ENCODE measurements at regions of chr12 and their contacts with region 1.

Region 1: GRCh38 chr12:21172079-21172478 is 41.1 kb downstream of the SLCO1B1 start:
- DNase-seq: no peak
- ATAC-seq: no peak
- H3K4me3 ChIP-seq: no peak overlapping the region
- H3K4me3 Mint-ChIP-seq: no peak overlapping the region
- H3K27ac ChIP-seq: no peak overlapping the region
- H3K27ac Mint-ChIP-seq: no peak overlapping the region
- H3K4me1 ChIP-seq: no peaks in the 10 kb centered on the region
- H3K4me1 Mint-ChIP-seq: no peaks in the 10 kb centered on the region
- H3K27me3 ChIP-seq: no peaks in the 10 kb centered on the region
- H3K27me3 Mint-ChIP-seq: no peaks in the 10 kb centered on the region

Region 2: GRCh38 chr12:21111733-21112132 is 60.3 kb before region 1 on chr12:
- CTCF ChIA-PET with region 1: no interaction called
- POLR2A ChIA-PET with region 1: no interaction called
- DNase-seq: no peak
- ATAC-seq: no peak
- H3K4me3 ChIP-seq: no peak overlapping the region
- H3K4me3 Mint-ChIP-seq: no peak overlapping the region
- H3K27ac ChIP-seq: no peak overlapping the region
- H3K27ac Mint-ChIP-seq: no peak overlapping the region
- H3K4me1 ChIP-seq: no peaks in the 10 kb centered on the region
- H3K4me1 Mint-ChIP-seq: no peaks in the 10 kb centered on the region
- H3K27me3 ChIP-seq: no peaks in the 10 kb centered on the region
- H3K27me3 Mint-ChIP-seq: no peaks in the 10 kb centered on the region

Region 3: GRCh38 chr12:21138016-21138415 is 34.1 kb before region 1 on chr12:
- CTCF ChIA-PET with region 1: no interaction called
- POLR2A ChIA-PET with region 1: no interaction called
- DNase-seq: no peak
- ATAC-seq: no peak
- H3K4me3 ChIP-seq: no peak overlapping the region
- H3K4me3 Mint-ChIP-seq: no peak overlapping the region
- H3K27ac ChIP-seq: no peak overlapping the region
- H3K27ac Mint-ChIP-seq: no peak overlapping the region
- H3K4me1 ChIP-seq: no peaks in the 10 kb centered on the region
- H3K4me1 Mint-ChIP-seq: no peaks in the 10 kb centered on the region
- H3K27me3 ChIP-seq: no peaks in the 10 kb centered on the region
- H3K27me3 Mint-ChIP-seq: no peaks in the 10 kb centered on the region

Region 4: DNA sequence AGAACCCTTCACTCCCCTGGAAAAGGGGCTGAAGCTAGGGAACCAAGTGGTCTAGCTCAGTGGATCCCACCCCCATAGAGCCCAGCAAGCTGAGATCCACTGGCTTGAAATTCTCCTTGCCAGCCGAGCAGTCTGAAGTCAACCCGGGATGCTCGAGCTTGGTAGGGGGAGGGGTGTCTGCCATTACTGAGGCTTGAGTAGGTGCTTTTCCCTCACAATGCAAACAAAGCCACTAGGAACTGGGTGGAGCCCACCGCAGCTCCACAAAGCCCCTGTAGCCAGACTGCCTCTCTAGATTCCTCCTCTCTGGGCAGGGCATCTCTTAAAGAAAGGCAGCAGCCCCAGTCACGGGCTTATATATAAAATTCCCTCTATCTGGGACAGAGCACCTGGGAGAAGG is 22.2 kb before region 1 on chr12:
- CTCF ChIA-PET with region 1: interaction called in 1 of 2 experiments, 10 read pairs
- POLR2A ChIA-PET with region 1: no interaction called
- DNase-seq: no peak
- ATAC-seq: no peak
- H3K4me3 ChIP-seq: no peak overlapping the region
- H3K4me3 Mint-ChIP-seq: no peak overlapping the region
- H3K27ac ChIP-seq: no peak overlapping the region
- H3K27ac Mint-ChIP-seq: no peak overlapping the region
- H3K4me1 ChIP-seq: no peaks in the 10 kb centered on the region
- H3K4me1 Mint-ChIP-seq: peaks cover 0 to 3% (median 0%) of the 10 kb centered on the region in 3 donors
- H3K27me3 ChIP-seq: no peaks in the 10 kb centered on the region
- H3K27me3 Mint-ChIP-seq: no peaks in the 10 kb centered on the region

Region 5: GRCh38 chr12:21183721-21184275 is 11.7 kb after region 1 on chr12:
- CTCF ChIA-PET with region 1: no interaction called
- POLR2A ChIA-PET with region 1: no interaction called
- DNase-seq: no peak
- ATAC-seq: no peak
- H3K4me3 ChIP-seq: no peak overlapping the region
- H3K4me3 Mint-ChIP-seq: no peak overlapping the region
- H3K27ac ChIP-seq: no peak overlapping the region
- H3K27ac Mint-ChIP-seq: no peak overlapping the region
- H3K4me1 ChIP-seq: no peaks in the 10 kb centered on the region
- H3K4me1 Mint-ChIP-seq: no peaks in the 10 kb centered on the region
- H3K27me3 ChIP-seq: no peaks in the 10 kb centered on the region
- H3K27me3 Mint-ChIP-seq: no peaks in the 10 kb centered on the region

Region 6: GRCh38 chr12:21239866-21240265 is 67.8 kb after region 1 on chr12:
- CTCF ChIA-PET with region 1: no interaction called
- POLR2A ChIA-PET with region 1: no interaction called
- DNase-seq: no peak
- ATAC-seq: no peak
- H3K4me3 ChIP-seq: no peak overlapping the region
- H3K4me3 Mint-ChIP-seq: no peak overlapping the region
- H3K27ac ChIP-seq: no peak overlapping the region
- H3K27ac Mint-ChIP-seq: no peak overlapping the region
- H3K4me1 ChIP-seq: no peaks in the 10 kb centered on the region
- H3K4me1 Mint-ChIP-seq: no peaks in the 10 kb centered on the region
- H3K27me3 ChIP-seq: no peaks in the 10 kb centered on the region
- H3K27me3 Mint-ChIP-seq: peaks cover 8 to 19% of the 10 kb centered on the region in 2 donors